Mucosa of descending colon (tissue), 3 donors: ENCODE measurements at regions of chr2 and their contacts with region 1.

Region 1: GRCh38 chr2:178914259-178914849 is 107.1 kb upstream of the TTN start:
- DNase-seq: peak; percentile 52 to 87 (median 76)
- ATAC-seq: peak; percentile 87
- H3K4me3 ChIP-seq: no peak overlapping the region
- H3K4me1 ChIP-seq: no peaks in the 10 kb centered on the region
- CTCF ChIP-seq: peak; percentile 77

Region 2: DNA sequence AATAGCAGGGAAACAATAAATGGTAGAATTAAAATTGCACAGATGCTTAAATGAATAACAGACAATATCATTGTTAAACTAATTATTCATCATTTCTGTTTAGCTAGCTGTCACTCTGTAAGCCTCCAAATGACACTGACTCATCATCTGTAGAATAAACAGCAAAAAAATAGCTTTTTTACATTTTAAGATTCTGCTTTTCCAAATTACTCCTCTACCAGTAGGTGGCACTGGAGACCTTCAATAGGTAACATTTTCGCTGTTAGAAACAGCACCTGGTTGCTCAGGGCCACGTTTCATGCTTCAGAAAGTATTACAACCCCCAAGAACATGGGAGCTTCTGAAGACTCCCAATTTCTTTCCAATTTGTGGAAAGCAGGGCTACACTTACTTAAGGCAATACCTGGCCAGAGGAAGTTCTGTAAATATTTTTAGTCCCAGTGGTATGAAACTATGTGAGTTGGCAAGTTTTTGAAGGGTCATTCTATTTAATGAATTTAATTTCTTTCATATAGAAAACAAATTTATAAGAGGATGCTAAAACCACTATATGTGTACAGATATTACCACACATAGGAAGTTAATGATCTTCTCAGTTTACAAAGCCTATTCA is 152.5 kb before region 1 on chr2:
- intact Hi-C with region 1: loop called in 1 of 2 experiments (anchors 10 kb)
- DNase-seq: peak in 1 of 3 donors; percentile 11
- ATAC-seq: no peak
- H3K4me3 ChIP-seq: no peak overlapping the region
- H3K4me1 ChIP-seq: no peaks in the 10 kb centered on the region
- CTCF ChIP-seq: peak; percentile 5

Region 3: GRCh38 chr2:178796079-178796677 is 118.2 kb before region 1 on chr2:
- intact Hi-C with region 1: loop called (anchors 10 kb)
- DNase-seq: no peak
- ATAC-seq: no peak
- H3K4me3 ChIP-seq: no peak overlapping the region
- H3K4me1 ChIP-seq: no peaks in the 10 kb centered on the region
- CTCF ChIP-seq: no peak

Region 4: DNA sequence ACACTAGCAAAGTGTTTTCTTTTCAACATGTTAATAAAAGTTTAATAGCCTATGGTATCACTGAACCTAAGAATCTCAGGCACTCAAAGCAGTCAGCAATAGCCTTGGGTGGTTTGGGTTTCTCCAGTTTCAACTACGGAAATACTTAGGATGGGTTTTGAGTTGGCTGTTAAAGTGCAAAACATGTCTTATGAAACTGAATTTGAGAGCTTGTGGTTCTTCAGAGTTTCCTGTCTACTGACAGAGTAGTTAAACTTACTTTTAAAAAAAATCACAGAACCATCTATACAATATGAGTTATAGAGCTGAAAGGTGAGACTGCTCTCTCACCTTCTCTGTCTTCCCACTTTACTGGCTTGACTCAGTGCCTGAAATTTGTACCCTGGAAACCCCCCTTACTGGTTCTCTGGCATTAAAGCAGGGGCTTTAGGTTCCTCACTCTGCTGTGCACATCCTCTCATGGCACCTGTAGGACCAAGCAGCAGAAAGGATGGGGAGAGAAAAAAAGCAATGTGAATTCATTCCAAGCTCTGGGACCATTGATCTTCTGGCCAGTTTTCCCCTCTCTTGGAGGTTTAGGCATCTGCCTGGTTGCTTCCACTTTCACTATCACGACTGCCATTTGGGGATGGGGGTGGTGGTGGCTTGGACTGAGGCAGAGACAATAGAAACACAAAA is 117.5 kb after region 1 on chr2:
- intact Hi-C with region 1: no loop called
- DNase-seq: no peak
- ATAC-seq: peak; percentile 51
- H3K4me3 ChIP-seq: no peak overlapping the region
- H3K4me1 ChIP-seq: no peaks in the 10 kb centered on the region
- CTCF ChIP-seq: no peak

Region 5: DNA sequence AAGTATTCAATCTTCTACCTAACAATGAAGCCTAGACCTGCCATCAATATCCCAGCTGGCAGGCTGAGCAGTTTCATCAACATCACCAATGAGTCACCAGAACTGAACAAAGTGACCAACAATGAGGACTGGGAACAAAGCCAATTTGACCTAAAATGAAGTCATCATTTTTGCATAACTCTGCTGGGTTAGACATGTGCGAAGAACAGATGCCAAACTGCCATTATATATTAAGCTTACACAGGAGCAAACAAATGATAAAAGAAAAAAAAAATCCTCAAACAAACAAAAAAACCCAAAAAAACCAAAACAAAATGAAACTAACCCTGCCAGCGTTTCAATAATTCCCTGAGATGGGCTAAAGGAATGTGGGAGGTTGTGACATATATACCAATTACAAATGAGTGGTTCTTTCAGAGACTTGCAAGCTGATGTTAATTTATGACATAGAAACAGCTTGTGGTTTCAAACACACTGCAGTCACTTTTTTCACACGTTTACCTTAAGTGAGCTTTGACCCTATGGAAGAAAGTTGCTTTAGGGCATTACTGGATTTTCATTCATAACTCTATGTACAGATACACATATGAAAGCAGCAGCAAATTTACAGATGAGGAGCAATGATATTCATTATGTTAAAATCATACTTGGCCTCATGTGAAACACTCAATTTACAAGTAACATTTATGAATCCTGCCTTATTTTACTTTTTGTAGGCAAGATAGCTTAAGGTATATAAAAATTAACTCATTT is 192.5 kb after region 1 on chr2:
- intact Hi-C with region 1: no loop called
- DNase-seq: peak in 1 of 3 donors; percentile 12
- ATAC-seq: peak; percentile 81
- H3K4me3 ChIP-seq: no peak overlapping the region
- H3K4me1 ChIP-seq: peaks cover 8% of the 10 kb centered on the region
- CTCF ChIP-seq: no peak